ENCODE measurements at regions of chr10 and their contacts with region 1.

Region 1: GRCh38 chr10:95783741-95784140 is 27.8 kb downstream of the ENTPD1 start:
- DNase-seq: no peak
- ATAC-seq: no peak
- H3K4me3 Mint-ChIP-seq: no peak overlapping the region
- H3K27ac Mint-ChIP-seq: peak overlapping the region; percentile 88
- H3K4me1 Mint-ChIP-seq: peaks cover 89% of the 10 kb centered on the region
- H3K27me3 Mint-ChIP-seq: no peaks in the 10 kb centered on the region

Region 2: DNA sequence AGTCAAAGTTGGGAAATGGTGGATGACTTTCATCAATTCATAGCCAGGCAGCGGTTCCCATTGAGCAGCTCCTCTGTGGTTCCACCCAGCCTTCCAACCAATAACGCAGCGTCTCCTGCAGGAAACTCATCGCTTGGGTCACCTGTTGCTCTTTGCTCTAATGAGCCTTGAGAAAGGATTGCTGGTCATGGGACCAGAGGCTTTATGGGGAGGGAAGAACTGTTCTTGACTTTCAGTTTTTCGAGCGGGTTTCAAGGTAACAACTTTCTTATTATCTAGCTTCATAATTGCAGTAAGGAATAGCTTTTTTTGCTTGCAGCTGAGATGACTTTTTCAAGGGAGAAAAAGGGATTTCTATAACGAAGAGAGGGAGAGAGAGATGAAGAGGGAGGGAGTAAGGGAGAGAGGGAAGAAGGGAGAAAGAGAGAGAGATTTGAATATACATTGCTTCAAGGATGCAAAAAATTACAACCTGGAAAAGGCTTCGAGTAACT is 28.2 kb before region 1 on chr10:
- CTCF ChIA-PET with region 1: interaction called, 22 read pairs
- DNase-seq: peak; percentile 74
- ATAC-seq: peak; percentile 37
- H3K4me3 Mint-ChIP-seq: peak overlapping the region; percentile 89
- H3K27ac Mint-ChIP-seq: peak overlapping the region; percentile 95
- H3K4me1 Mint-ChIP-seq: peaks cover 53% of the 10 kb centered on the region
- H3K27me3 Mint-ChIP-seq: peaks cover 5% of the 10 kb centered on the region

Measured in activated CD8-positive, alpha-beta memory T cell treated with anti-CD3 and anti-CD28 coated beads, Interleukin-2, amount 10 ng/mL, durations not matched to agents 7 days and 5 days (primary cell).